K562 (cell line): ENCODE measurements at regions of chr18 and their contacts with region 1.

Region 1: DNA sequence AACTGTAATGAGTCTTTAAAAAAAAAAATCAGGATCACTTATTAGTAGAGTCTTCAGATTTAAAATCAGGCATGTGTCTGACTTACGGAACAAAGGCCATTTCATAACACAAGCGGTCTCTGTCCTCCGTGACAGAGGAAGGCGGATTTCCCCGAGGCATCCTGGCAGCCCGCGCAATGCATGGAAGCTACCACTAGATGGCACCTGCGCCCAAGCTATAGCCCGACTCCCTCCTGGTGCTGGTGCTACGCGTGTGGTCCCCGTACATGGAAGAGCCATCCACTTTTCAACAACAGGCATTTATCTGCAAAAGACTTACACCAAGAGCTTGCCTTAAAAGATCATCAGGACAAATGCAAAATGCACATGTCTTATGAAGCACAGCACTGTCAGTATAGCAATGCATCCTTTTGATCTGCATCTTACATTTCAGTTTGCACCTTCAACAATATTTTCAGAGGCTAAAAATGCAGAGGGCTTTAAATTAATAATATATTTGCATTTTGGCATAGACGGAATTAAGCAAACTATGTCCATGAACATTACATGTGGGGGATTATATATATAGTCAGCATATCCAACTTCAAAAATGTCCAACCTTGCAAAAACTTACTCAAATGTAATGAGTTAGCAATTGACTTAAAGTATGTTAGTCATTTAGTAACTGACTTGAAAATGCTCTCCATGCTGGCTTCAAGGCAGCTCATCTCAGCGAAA is 96.0 kb downstream of the ZNF516 start:
- DNase-seq: peak; percentile 64 to 79 (median 76)
- ATAC-seq: peak; percentile 90
- H3K4me3 ChIP-seq: no peak overlapping the region
- H3K27ac ChIP-seq: no peak overlapping the region
- H3K4me1 ChIP-seq: peaks cover 0 to 5% of the 10 kb centered on the region in 2 experiments; a peak in 1 of 5 replicates
- H3K27me3 ChIP-seq: peaks cover 0 to 5% of the 10 kb centered on the region in 2 experiments; a peak in 1 of 5 replicates
- CTCF ChIP-seq: peak; percentile 76 to 82 (median 76)
- EP300 ChIP-seq: no peak
- POLR2A ChIP-seq: no peak
- RAD21 ChIP-seq: peak; percentile 56 to 74

Region 2: DNA sequence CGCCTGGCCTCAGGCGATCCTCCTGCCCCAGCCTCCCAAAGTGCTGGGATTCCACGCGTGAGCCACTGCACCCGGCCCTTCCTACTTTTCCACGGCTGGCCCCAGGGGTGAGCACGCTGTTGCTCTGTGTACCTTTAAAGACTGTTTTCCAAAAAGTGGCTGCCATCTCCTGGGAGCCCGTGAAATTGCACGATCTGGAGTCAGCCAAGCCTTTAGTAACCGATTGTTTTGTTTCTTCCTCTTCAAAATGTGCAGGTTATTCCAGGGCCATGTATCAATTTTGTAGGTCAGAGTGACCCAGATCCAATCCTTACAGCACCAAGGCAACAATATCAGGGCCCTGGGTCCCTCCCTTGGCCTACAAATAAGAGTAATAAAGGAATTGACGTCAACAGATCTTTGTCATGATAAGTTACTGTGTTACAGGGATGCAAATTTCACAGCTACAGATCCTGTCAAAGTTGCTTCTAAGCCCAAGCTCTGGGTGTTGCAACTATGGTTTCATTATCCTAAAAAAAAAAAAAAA is 287.7 kb after region 1 on chr18:
- CTCF ChIA-PET with region 1: no interaction called
- POLR2A ChIA-PET with region 1: no interaction called
- in situ Hi-C with region 1: no loop called
- intact Hi-C with region 1: loop called (anchors 5 kb)
- DNase-seq: no peak
- ATAC-seq: peak; percentile 73
- H3K4me3 ChIP-seq: no peak overlapping the region
- H3K27ac ChIP-seq: no peak overlapping the region
- H3K4me1 ChIP-seq: no peaks in the 10 kb centered on the region; a peak in 1 of 5 replicates
- H3K27me3 ChIP-seq: peaks cover 0 to 42% of the 10 kb centered on the region in 2 experiments; a peak in 3 of 5 replicates
- CTCF ChIP-seq: peak in 2 of 3 experiments; percentile 29 to 42; a peak in 3 of 6 replicates
- EP300 ChIP-seq: no peak
- POLR2A ChIP-seq: no peak
- RAD21 ChIP-seq: peak in 1 of 2 experiments; percentile 28; a peak in 2 of 4 replicates

Region 3: GRCh38 chr18:76709659-76710645 is 310.9 kb after region 1 on chr18:
- CTCF ChIA-PET with region 1: interaction called, 19 read pairs
- POLR2A ChIA-PET with region 1: no interaction called
- in situ Hi-C with region 1: no loop called
- intact Hi-C with region 1: loop called (anchors 1 kb)
- DNase-seq: peak; percentile 41 to 56 (median 54)
- ATAC-seq: peak; percentile 90
- H3K4me3 ChIP-seq: no peak overlapping the region
- H3K27ac ChIP-seq: no peak overlapping the region
- H3K4me1 ChIP-seq: peaks cover 0 to 10% of the 10 kb centered on the region in 2 experiments; a peak in 1 of 5 replicates
- H3K27me3 ChIP-seq: peaks cover 0 to 23% of the 10 kb centered on the region in 2 experiments; a peak in 2 of 5 replicates
- CTCF ChIP-seq: peak; percentile 68 to 79 (median 72)
- EP300 ChIP-seq: no peak
- POLR2A ChIP-seq: no peak
- RAD21 ChIP-seq: peak; percentile 65 to 75